Caco-2 (cell line): ENCODE measurements at regions of chrX and their contacts with region 1.

Region 1: GRCh38 chrX:21725496-21725895 is 32.4 kb downstream of the SMPX start:
- DNase-seq: peak; percentile 37 to 44
- H3K4me3 ChIP-seq: no peak overlapping the region
- H3K4me3 Mint-ChIP-seq: no peak overlapping the region
- H3K27ac Mint-ChIP-seq: no peak overlapping the region
- H3K4me1 ChIP-seq: peaks cover 26% of the 10 kb centered on the region
- H3K4me1 Mint-ChIP-seq: no peaks in the 10 kb centered on the region
- H3K27me3 ChIP-seq: no peaks in the 10 kb centered on the region
- H3K27me3 Mint-ChIP-seq: no peaks in the 10 kb centered on the region
- CTCF ChIP-seq: peak; percentile 46 to 52

Region 2: DNA sequence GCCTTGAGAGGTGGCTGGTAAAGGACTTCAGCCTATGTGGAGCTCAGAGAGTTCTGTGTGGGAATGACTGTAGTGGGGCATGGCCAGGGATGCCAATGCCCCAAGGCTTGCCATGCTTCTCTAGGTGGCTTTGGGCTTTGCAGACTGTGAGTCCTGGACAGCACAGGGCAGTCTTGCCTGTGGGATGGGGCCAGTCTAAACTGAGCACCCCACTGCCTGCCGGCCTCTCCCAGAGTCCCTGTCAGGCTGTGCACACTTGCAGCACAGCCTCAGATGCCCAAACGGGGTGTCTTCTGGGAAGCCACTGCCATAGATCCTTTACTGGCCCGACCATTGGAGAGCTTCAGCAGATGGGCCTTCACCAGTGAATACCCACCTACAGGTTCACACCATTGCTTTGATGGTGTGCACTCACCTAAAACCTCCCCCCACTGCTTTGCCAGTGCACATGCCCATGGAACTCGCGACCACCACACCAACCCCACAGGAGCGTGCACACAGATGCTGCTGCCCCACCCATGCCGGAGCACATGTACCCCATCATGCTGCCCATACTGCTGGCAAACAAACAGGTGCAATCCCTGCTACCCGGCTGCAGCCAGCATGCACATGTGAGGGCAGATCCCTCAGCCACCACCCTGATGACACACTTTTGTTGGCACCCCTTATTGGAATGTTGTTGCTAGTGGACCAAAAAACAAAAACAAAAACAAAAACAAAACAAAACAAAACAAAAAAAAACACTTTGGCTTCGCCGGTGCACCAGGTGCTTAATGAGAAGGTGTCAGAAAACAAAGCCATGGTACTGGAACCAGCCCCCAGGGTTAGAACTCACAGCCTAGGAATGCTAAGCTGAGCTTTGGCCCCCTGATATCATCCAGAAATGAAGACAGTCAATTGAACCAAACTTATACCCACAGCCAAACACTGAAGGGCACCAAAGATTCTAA is 448.5 kb before region 1 on chrX:
- CTCF ChIA-PET with region 1: no interaction called
- POLR2A ChIA-PET with region 1: no interaction called
- intact Hi-C with region 1: no loop called
- DNase-seq: no peak
- H3K4me3 ChIP-seq: no peak overlapping the region
- H3K4me3 Mint-ChIP-seq: no peak overlapping the region
- H3K27ac Mint-ChIP-seq: no peak overlapping the region
- H3K4me1 ChIP-seq: no peaks in the 10 kb centered on the region
- H3K4me1 Mint-ChIP-seq: no peaks in the 10 kb centered on the region
- H3K27me3 ChIP-seq: no peaks in the 10 kb centered on the region
- H3K27me3 Mint-ChIP-seq: no peaks in the 10 kb centered on the region
- CTCF ChIP-seq: no peak

Region 3: DNA sequence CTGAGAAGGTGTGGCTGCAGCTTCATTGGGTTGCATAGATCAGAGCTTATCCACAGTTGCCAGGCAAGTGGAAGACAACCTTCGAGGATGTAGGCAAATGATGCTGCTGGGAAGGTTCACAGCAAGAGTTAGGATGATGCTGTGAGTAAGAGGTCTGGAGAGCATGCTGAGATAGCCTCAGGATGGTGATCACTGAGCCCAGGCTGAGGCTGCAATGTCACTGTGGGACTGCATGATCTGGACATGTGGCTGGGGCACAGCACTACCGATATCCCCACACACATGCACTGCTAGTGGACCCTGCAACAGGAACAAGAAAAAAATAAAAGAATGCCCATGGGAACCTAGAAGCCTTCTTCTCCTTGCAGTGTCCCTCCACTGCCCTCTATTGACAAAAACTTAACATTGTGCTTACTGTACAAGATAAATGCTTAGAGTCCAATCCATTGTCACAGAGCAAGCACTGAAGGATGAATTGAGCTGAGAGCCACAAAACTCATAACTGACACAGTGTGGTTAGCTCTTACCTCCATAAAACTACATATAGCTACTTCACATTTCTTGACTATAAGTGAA is 245.7 kb before region 1 on chrX:
- CTCF ChIA-PET with region 1: interaction called, 16 read pairs
- POLR2A ChIA-PET with region 1: no interaction called
- intact Hi-C with region 1: loop called (anchors 1 kb)
- DNase-seq: peak in 1 of 2 experiments; percentile 50
- H3K4me3 ChIP-seq: no peak overlapping the region
- H3K4me3 Mint-ChIP-seq: no peak overlapping the region
- H3K27ac Mint-ChIP-seq: no peak overlapping the region
- H3K4me1 ChIP-seq: 0 out of 2 replicates have a peak, but pooled peaks cover 3% of the 10 kb centered on the region
- H3K4me1 Mint-ChIP-seq: no peaks in the 10 kb centered on the region
- H3K27me3 ChIP-seq: no peaks in the 10 kb centered on the region
- H3K27me3 Mint-ChIP-seq: no peaks in the 10 kb centered on the region
- CTCF ChIP-seq: peak; percentile 26 to 63

Region 4: DNA sequence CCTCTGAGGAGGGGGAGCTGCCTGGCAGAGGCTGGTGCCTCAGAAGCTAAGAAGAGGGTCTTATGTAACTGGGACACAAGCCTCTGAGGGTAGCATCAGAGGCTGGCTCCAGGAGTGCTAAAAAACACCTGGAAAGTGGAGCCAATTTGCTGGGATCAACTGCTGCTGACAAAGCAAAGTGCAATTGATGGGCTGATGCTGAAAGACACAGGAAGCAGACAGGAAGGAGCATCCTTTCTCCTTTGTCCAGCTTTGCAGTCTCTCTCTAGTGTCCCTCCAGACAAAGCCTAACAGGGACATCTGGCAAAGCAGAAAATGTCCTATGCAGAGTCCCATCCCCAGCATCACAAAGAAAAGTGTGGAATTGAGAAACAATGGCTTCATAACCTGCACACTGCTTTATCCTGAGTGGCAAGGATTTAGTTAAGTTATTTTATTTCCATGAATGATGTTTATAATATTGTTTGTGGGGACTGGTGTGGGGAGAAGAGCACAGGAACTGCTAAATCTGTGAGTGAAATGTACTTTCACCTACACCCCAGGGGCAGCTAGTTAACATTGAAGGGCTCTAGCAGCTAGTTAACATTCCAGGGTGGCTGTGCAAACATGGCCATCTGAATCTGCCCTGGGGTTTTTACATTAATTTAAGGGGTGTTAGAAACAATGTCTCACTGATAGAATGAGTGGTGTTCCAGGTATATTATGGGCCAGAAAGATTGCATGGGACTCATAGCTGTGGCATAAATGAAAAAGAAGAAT is 88.3 kb after region 1 on chrX:
- CTCF ChIA-PET with region 1: no interaction called
- POLR2A ChIA-PET with region 1: no interaction called
- intact Hi-C with region 1: no loop called
- DNase-seq: peak in 1 of 2 experiments; percentile 4
- H3K4me3 ChIP-seq: no peak overlapping the region
- H3K4me3 Mint-ChIP-seq: no peak overlapping the region
- H3K27ac Mint-ChIP-seq: peak overlapping the region; percentile 69
- H3K4me1 ChIP-seq: peaks cover 18% of the 10 kb centered on the region
- H3K4me1 Mint-ChIP-seq: peaks cover 19% of the 10 kb centered on the region
- H3K27me3 ChIP-seq: no peaks in the 10 kb centered on the region
- H3K27me3 Mint-ChIP-seq: no peaks in the 10 kb centered on the region
- CTCF ChIP-seq: no peak